ENCODE measurements at regions of chr18 and their contacts with region 1.

Region 1: DNA sequence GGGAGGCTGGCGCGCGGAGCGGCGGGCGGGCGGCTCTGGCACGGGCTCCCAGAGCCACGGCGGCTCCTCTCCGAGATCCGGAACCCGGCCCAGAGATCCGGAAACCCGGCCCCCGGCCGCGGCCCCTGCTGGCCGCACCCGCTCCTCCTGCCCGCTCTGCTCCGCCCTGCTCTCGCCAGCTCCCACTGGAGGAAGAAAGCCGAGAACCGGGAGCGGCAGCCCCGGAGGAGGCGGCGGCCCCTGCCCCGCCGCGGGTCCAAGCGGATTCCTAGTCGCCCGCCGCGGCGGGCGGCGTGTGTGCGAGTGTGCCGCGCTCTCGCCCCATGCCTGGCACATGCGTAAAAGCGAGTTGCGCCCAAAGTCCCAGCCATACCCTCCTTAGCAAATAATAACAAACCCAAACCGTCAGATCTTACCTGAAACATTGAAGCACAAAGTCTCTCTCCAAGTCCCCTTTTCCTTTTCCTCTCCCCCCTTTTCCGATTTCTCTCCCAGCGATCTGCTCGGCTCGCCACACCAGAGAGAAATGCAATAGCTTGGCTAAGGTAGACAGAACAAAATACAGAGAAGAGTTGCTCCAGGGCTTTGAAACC is 108.7 kb upstream of the KCTD1 start:
- DNase-seq: peak; percentile 75
- H3K4me3 ChIP-seq: peak overlapping the region; percentile 71 to 78
- H3K27ac ChIP-seq: peak overlapping the region; percentile 96 to 97
- H3K4me1 ChIP-seq: no peaks in the 10 kb centered on the region
- H3K27me3 ChIP-seq: no peaks in the 10 kb centered on the region
- CTCF ChIP-seq: peak in 2 of 4 experiments; percentile 43 to 51
- POLR2A ChIP-seq: peak; percentile 64

Region 2: GRCh38 chr18:26317398-26317797 is 339.6 kb before region 1 on chr18:
- intact Hi-C with region 1: loop called (anchors 10 kb)
- DNase-seq: no peak
- H3K4me3 ChIP-seq: no peak overlapping the region
- H3K27ac ChIP-seq: no peak overlapping the region
- H3K4me1 ChIP-seq: no peaks in the 10 kb centered on the region
- H3K27me3 ChIP-seq: no peaks in the 10 kb centered on the region
- CTCF ChIP-seq: no peak
- POLR2A ChIP-seq: no peak

Region 3: DNA sequence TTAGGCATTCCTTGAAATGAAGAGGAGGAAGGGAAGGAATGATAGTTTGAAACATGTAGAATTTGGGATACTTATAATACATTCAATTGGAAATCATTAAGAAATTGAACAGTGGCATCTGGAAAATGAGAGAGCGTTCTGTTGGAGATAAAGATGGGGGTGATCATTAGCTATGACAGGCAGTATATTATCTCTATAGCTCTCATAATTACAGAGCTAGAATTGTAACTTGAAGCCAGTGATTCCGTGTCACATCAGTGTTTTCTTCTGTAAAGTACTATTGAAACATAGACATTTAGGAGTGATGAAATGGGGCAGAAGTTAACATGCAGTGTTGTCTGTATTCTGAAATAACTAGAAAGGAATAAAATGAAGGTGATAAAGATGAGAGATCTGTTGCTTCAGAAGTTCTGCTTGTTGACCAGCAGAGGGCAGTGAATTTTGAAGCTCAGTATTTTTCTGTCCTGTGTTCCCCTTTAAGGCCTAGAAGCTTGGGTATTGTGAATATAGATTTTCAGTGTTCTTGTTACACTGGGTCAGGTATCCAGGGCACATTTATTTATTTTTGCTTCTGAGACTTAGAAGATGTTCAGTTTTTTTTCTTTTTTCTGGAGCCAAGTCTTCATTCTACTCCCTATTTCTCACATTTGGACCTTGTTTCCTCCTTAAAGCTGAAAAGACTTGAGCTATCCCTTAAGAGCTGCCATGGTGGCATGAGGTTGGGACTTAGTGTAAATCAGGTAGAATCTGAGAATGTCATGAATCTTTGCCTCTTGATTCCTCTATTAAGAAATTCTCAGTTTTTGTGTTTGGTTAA is 273.4 kb before region 1 on chr18:
- intact Hi-C with region 1: loop called (anchors 5 kb)
- DNase-seq: no peak
- H3K4me3 ChIP-seq: no peak overlapping the region
- H3K27ac ChIP-seq: no peak overlapping the region
- H3K4me1 ChIP-seq: no peaks in the 10 kb centered on the region
- H3K27me3 ChIP-seq: no peaks in the 10 kb centered on the region
- CTCF ChIP-seq: peak; percentile 30 to 77 (median 58)
- POLR2A ChIP-seq: no peak